ENCODE measurements at regions of chr22 and their contacts with region 1.

Region 1: DNA sequence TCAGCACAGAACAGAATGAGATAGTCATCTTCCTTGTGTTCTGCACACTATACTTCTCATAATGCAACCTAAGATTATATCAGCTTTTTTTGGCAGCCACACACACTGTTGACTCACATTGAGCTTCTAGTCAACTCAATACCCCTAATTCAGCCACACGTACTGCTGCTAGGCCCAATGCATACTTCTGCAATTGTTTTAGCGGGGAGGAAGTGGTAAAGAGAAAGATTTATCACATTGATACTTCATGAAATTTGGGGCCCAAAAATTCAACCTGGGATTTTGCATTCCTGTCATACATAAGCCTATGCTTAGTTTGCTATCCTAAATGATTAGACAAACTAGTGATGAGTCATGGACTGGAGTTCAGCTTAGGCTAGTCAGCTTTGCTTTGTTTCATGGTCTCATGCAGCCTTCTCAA is 8.6 kb upstream of the UPB1 start:
- DNase-seq: no peak
- H3K4me3 ChIP-seq: no peak overlapping the region
- H3K4me3 Mint-ChIP-seq: no peak overlapping the region
- H3K27ac ChIP-seq: no peak overlapping the region
- H3K27ac Mint-ChIP-seq: peak overlapping the region in 3 of 7 donors; percentile 14 to 59 (median 18)
- H3K4me1 ChIP-seq: no peaks in the 10 kb centered on the region
- H3K4me1 Mint-ChIP-seq: peaks cover 5 to 11% (median 8%) of the 10 kb centered on the region in 4 donors
- H3K27me3 ChIP-seq: no peaks in the 10 kb centered on the region
- H3K27me3 Mint-ChIP-seq: peaks cover 0 to 4% of the 10 kb centered on the region in 2 donors

Region 2: DNA sequence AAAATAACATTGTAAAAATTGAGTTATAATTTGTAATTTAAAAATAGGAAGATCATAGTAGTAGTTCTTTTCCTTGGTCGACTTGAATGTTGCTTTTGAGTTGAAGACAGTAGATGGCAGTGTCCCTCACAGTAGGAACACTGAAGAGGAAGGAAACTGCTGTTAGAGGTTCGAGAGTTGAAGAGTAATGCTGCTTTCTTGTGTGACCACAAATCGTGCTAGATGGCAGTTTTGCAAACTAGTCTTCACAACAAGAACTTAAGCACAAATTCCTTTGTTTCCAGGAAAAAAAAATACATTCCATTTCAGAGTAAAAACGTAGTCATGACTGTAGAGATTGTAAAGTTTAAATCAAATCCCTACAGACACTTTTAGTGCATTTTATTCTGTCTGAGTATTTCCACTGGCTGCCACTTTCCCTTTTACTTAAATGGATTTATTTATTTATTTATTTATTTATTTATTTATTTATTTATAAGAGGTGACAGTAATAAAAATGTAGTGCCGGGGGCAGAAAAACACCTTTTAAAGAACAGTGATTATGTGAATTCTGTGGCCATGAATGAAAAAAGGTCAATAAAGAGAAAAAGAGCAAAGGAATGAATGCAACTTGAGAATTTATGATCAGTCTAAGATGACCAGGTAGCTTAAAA is 161.3 kb before region 1 on chr22:
- CTCF ChIA-PET with region 1: no interaction called
- POLR2A ChIA-PET with region 1: no interaction called
- intact Hi-C with region 1: loop called (anchors 1 kb)
- DNase-seq: peak in 4 of 5 donors; percentile 39 to 49 (median 44)
- H3K4me3 ChIP-seq: no peak overlapping the region
- H3K4me3 Mint-ChIP-seq: no peak overlapping the region
- H3K27ac ChIP-seq: no peak overlapping the region
- H3K27ac Mint-ChIP-seq: peak overlapping the region in 1 of 7 donors; percentile 12
- H3K4me1 ChIP-seq: peaks cover 9% of the 10 kb centered on the region
- H3K4me1 Mint-ChIP-seq: peaks cover 13 to 22% (median 20%) of the 10 kb centered on the region in 4 donors
- H3K27me3 ChIP-seq: no peaks in the 10 kb centered on the region
- H3K27me3 Mint-ChIP-seq: no peaks in the 10 kb centered on the region

Region 3: GRCh38 chr22:24510637-24511625 is 24.4 kb after region 1 on chr22:
- CTCF ChIA-PET with region 1: no interaction called
- POLR2A ChIA-PET with region 1: no interaction called
- intact Hi-C with region 1: no loop called
- DNase-seq: no peak
- H3K4me3 ChIP-seq: no peak overlapping the region
- H3K4me3 Mint-ChIP-seq: no peak overlapping the region
- H3K27ac ChIP-seq: no peak overlapping the region
- H3K27ac Mint-ChIP-seq: peak overlapping the region in 1 of 7 donors; percentile 46
- H3K4me1 ChIP-seq: no peaks in the 10 kb centered on the region
- H3K4me1 Mint-ChIP-seq: peaks cover 0 to 8% (median 2%) of the 10 kb centered on the region in 4 donors
- H3K27me3 ChIP-seq: no peaks in the 10 kb centered on the region
- H3K27me3 Mint-ChIP-seq: no peaks in the 10 kb centered on the region

Measured in CD4-positive, alpha-beta memory T cell (primary cell).